ENCODE measurements at regions of chr10 and their contacts with region 1.

Region 1: GRCh38 chr10:72319416-72320254 is 35.1 kb downstream of the DNAJB12 start:
- DNase-seq: peak; percentile 82
- H3K4me3 Mint-ChIP-seq: peak overlapping the region; percentile 81
- H3K27ac Mint-ChIP-seq: peak overlapping the region; percentile 99
- H3K4me1 Mint-ChIP-seq: peaks cover 68% of the 10 kb centered on the region
- H3K27me3 Mint-ChIP-seq: no peaks in the 10 kb centered on the region

Region 2: DNA sequence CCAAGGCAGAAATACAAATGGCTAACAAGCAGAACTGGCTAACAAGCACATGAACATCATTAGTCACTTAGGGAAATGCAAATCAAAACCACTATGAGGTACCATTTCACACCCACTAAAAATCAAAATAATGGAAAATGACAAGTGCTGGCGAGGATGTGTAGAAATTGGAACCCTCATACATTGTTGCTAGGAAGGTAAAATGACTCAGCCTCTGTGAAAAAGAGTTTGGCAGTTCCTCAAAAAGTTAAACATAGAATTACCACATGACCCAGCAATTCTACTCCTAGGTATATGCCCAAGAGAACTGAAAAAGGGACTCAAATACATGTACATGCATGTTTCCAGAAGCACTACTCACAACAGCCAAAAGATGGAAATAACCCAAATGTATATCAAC is 156.7 kb before region 1 on chr10:
- intact Hi-C with region 1: no loop called
- DNase-seq: no peak
- H3K4me3 Mint-ChIP-seq: no peak overlapping the region
- H3K27ac Mint-ChIP-seq: peak overlapping the region; percentile 76
- H3K4me1 Mint-ChIP-seq: peaks cover 28% of the 10 kb centered on the region
- H3K27me3 Mint-ChIP-seq: no peaks in the 10 kb centered on the region

Region 3: GRCh38 chr10:72260588-72261322 is 58.9 kb before region 1 on chr10:
- intact Hi-C with region 1: loop called (anchors 1 kb)
- DNase-seq: peak; percentile 85
- H3K4me3 Mint-ChIP-seq: peak overlapping the region; percentile 82
- H3K27ac Mint-ChIP-seq: peak overlapping the region; percentile 97
- H3K4me1 Mint-ChIP-seq: peaks cover 51% of the 10 kb centered on the region
- H3K27me3 Mint-ChIP-seq: no peaks in the 10 kb centered on the region

Region 4: GRCh38 chr10:72273410-72274212 is 46.0 kb before region 1 on chr10 and contains the start of gene DDIT4:
- intact Hi-C with region 1: loop called (anchors 1 kb)
- DNase-seq: peak; percentile 99
- H3K4me3 Mint-ChIP-seq: peak within 1 kb of the TSS; percentile 100
- H3K27ac Mint-ChIP-seq: peak within 1 kb of the TSS; percentile 94
- H3K4me1 Mint-ChIP-seq: peaks cover 43% of the 10 kb centered on the region
- H3K27me3 Mint-ChIP-seq: no peaks in the 10 kb centered on the region
- total RNA-seq, gene DDIT4: 543 and 569 TPM in 2 replicates

Region 5: GRCh38 chr10:72292223-72292691 is 27.4 kb before region 1 on chr10:
- intact Hi-C with region 1: loop called (anchors 1 kb)
- DNase-seq: no peak
- H3K4me3 Mint-ChIP-seq: peak overlapping the region; percentile 17
- H3K27ac Mint-ChIP-seq: peak overlapping the region; percentile 78
- H3K4me1 Mint-ChIP-seq: peaks cover 55% of the 10 kb centered on the region
- H3K27me3 Mint-ChIP-seq: no peaks in the 10 kb centered on the region

Region 6: DNA sequence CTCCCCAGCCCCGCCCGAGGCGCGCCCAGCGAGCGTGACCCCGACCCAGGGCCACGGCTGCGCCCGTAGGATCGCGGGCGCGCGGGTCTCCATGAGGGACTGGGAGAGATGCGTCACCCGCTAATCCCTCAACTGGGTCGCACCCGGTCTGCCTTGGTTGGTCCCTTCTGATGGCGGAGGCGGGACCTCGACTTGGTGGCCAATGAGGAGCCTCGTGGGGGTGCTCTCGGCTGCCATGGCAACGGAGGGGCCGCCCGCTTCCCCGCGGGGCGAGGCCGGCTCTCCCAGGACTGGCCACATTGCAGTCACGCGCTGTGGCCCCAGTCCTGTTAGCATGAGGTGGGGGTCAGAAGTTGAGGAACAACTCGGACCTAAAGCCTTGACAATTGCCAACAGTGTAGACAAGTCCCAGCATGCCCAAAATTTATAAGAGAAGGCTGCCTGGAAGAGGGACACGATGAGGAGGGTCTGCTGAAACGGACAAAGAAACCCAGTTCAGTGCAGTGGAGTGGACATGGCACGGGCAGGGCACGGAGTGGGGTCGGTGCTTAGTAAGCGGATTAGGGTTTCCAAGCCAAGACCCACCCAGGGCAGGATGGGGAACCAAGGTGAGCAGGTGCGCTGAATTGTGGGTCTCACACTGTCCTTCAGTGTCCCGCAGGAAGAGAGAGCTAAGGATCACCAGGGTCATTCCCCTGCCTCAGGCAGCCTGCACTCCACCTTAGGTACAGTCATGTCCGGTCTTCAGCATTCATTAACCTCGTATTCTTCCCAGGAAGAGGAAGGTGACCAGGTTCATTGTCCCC is 21.5 kb before region 1 on chr10:
- intact Hi-C with region 1: loop called (anchors 1 kb)
- DNase-seq: peak; percentile 91
- H3K4me3 Mint-ChIP-seq: peak overlapping the region; percentile 76
- H3K27ac Mint-ChIP-seq: peak overlapping the region; percentile 98
- H3K4me1 Mint-ChIP-seq: peaks cover 50% of the 10 kb centered on the region
- H3K27me3 Mint-ChIP-seq: no peaks in the 10 kb centered on the region

Region 7: GRCh38 chr10:72308320-72308987 is 11.2 kb before region 1 on chr10:
- intact Hi-C with region 1: loop called (anchors 1 kb)
- DNase-seq: no peak
- H3K4me3 Mint-ChIP-seq: no peak overlapping the region
- H3K27ac Mint-ChIP-seq: peak overlapping the region; percentile 86
- H3K4me1 Mint-ChIP-seq: peaks cover 58% of the 10 kb centered on the region
- H3K27me3 Mint-ChIP-seq: no peaks in the 10 kb centered on the region

Measured in activated T-helper 2 cell treated with anti-CD3 and anti-CD28 coated beads, Interferon-gamma antibody, Interleukin-2, Interleukin-4, amounts not matched to agents 10 μg/mL and 5 μg/mL and 100 μg/mL, durations not matched to agents 14 hours and 24 hours and 36 hours (primary cell).